Calu3 (cell line): ENCODE measurements at regions of chr7 and their contacts with region 1.

Region 1: GRCh38 chr7:20598459-20599309 is 16.8 kb upstream of the ABCB5 start:
- DNase-seq: peak; percentile 35
- H3K4me3 Mint-ChIP-seq: no peak overlapping the region
- H3K27ac Mint-ChIP-seq: peak overlapping the region; percentile 55
- H3K4me1 Mint-ChIP-seq: peaks cover 17% of the 10 kb centered on the region
- H3K27me3 Mint-ChIP-seq: no peaks in the 10 kb centered on the region
- CTCF ChIP-seq: peak; percentile 72

Region 2: DNA sequence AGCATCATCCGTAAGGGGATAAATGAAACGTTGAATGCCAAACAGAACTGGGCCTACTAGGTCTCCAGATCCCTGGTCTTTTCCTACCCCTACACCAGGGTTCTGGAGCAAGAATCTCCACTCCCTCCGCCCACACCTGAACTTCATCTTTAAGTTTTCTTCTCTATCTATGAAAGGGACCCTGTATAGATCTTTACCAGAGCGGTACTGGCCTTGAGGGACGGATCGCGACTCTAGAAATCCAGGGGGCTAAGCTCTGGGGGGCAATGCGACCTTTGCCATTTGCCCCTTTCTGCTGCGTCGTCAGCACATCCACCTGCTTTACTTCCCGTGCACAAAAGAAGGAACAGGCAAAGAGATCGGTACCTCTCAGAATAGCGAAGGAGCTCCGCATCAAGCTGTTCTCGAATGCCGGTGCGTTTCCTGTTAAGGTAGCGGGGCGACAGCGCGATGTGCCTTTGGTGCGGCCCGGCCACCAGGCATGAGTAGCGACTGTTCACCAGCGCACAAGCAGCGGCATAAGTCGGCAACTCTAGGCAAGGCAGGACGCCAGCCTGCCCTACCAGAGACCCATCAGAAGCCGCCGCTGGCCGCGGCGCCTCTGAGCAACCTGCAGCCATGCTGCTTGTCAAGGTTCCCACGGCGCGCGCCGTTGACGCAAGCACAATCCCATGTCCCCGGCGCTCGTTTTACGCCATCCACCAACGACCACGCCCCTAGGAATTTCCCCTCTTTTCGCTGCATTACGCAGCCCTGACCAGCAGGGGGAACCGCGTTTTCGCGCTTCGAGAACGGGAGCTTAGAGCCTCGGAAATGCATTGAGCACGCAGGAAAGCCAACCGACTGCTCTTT is 890.1 kb before region 1 on chr7 and contains the start of gene POLR1F:
- CTCF ChIA-PET with region 1: interaction called, 122 read pairs
- intact Hi-C with region 1: loop called (anchors 1 kb)
- DNase-seq: peak; percentile 99
- H3K4me3 Mint-ChIP-seq: peak within 1 kb of the TSS; percentile 99
- H3K27ac Mint-ChIP-seq: peak within 1 kb of the TSS; percentile 92
- H3K4me1 Mint-ChIP-seq: peaks cover 52% of the 10 kb centered on the region
- H3K27me3 Mint-ChIP-seq: no peaks in the 10 kb centered on the region
- CTCF ChIP-seq: peak; percentile 96
- total RNA-seq, gene POLR1F: 37.7 and 43.1 TPM in 2 replicates

Region 3: GRCh38 chr7:19747740-19748339 is 850.8 kb before region 1 on chr7:
- CTCF ChIA-PET with region 1: interaction called, 53 read pairs
- intact Hi-C with region 1: loop called (anchors 1 kb)
- DNase-seq: peak; percentile 39
- H3K4me3 Mint-ChIP-seq: no peak overlapping the region
- H3K27ac Mint-ChIP-seq: no peak overlapping the region
- H3K4me1 Mint-ChIP-seq: peaks cover 26% of the 10 kb centered on the region
- H3K27me3 Mint-ChIP-seq: no peaks in the 10 kb centered on the region
- CTCF ChIP-seq: peak; percentile 86

Region 4: GRCh38 chr7:20158684-20159083 is 440.0 kb before region 1 on chr7:
- CTCF ChIA-PET with region 1: interaction called, 3 read pairs
- intact Hi-C with region 1: loop called (anchors 1 kb)
- DNase-seq: peak; percentile 20
- H3K4me3 Mint-ChIP-seq: no peak overlapping the region
- H3K27ac Mint-ChIP-seq: peak overlapping the region; percentile 48
- H3K4me1 Mint-ChIP-seq: peaks cover 24% of the 10 kb centered on the region
- H3K27me3 Mint-ChIP-seq: no peaks in the 10 kb centered on the region
- CTCF ChIP-seq: no peak

Region 5: DNA sequence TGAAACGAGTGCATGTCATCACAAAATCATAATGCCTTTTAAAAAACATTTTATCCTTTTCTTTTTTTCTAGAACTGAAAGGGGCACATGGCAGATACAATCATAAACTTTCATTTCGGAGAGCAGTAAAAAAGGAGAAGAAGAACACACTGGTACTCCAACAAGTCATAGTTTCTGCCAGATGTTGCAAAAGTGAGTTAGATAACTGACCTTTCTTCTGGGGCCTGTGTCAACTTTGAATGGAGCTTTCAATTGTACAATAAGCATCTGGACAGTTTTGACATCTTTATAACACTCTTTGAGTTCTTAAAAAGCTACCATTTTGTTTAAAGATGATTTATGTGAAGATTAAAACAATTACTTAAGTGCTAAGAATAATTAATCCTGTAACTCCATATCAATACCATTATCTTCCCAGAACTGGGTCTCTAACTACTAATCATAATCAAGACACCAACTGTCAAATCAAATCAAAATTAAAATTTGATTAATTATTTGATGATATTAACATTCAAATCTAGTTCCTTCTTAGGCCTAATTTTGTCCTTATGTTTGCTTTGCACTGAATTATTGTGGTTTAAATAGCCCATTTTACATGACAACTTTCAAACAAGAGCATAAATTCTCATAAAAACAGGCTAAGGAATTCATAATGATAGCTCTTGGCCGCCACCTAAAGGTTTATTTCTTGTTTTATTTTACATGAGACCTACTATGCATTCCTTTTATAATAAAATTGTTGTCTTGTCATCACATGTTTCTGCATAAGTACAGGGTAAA is 287.5 kb before region 1 on chr7:
- CTCF ChIA-PET with region 1: interaction called, 9 read pairs
- intact Hi-C with region 1: loop called (anchors 5 kb)
- DNase-seq: peak; percentile 50
- H3K4me3 Mint-ChIP-seq: no peak overlapping the region
- H3K27ac Mint-ChIP-seq: peak overlapping the region; percentile 30
- H3K4me1 Mint-ChIP-seq: peaks cover 42% of the 10 kb centered on the region
- H3K27me3 Mint-ChIP-seq: no peaks in the 10 kb centered on the region
- CTCF ChIP-seq: peak; percentile 71

Region 6: GRCh38 chr7:20393021-20393610 is 205.6 kb before region 1 on chr7:
- CTCF ChIA-PET with region 1: interaction called, 14 read pairs
- intact Hi-C with region 1: no loop called
- DNase-seq: peak; percentile 39
- H3K4me3 Mint-ChIP-seq: peak overlapping the region; percentile 23
- H3K27ac Mint-ChIP-seq: peak overlapping the region; percentile 38
- H3K4me1 Mint-ChIP-seq: peaks cover 42% of the 10 kb centered on the region
- H3K27me3 Mint-ChIP-seq: no peaks in the 10 kb centered on the region
- CTCF ChIP-seq: no peak

Region 7: GRCh38 chr7:20539201-20539600 is 59.5 kb before region 1 on chr7:
- CTCF ChIA-PET with region 1: interaction called, 11 read pairs
- intact Hi-C with region 1: no loop called
- DNase-seq: no peak
- H3K4me3 Mint-ChIP-seq: no peak overlapping the region
- H3K27ac Mint-ChIP-seq: no peak overlapping the region
- H3K4me1 Mint-ChIP-seq: no peaks in the 10 kb centered on the region
- H3K27me3 Mint-ChIP-seq: no peaks in the 10 kb centered on the region
- CTCF ChIP-seq: no peak

Region 8: GRCh38 chr7:20560325-20561180 is 38.1 kb before region 1 on chr7:
- CTCF ChIA-PET with region 1: no interaction called
- intact Hi-C with region 1: no loop called
- DNase-seq: no peak
- H3K4me3 Mint-ChIP-seq: no peak overlapping the region
- H3K27ac Mint-ChIP-seq: peak overlapping the region; percentile 97
- H3K4me1 Mint-ChIP-seq: peaks cover 42% of the 10 kb centered on the region
- H3K27me3 Mint-ChIP-seq: no peaks in the 10 kb centered on the region
- CTCF ChIP-seq: no peak

Region 9: DNA sequence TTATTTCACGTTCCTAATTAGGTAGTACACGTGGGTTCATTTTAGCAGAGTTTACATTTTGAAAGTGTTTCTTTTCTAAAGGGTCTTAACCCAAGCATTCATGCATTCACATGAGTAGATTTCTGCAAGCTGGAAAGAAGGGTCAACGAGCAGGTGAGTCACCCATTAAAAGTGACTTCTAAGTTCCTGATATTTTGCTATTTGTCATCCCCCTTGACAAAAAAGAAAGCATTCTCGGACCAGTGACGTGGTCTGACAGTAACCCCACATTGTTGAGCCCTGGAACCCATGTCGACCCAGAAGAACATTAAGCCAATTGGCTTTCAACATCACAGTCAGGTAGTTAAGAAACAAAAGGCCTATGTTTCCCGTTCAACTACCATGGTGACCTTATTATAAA is 66.4 kb after region 1 on chr7:
- CTCF ChIA-PET with region 1: no interaction called
- intact Hi-C with region 1: no loop called
- DNase-seq: no peak
- H3K4me3 Mint-ChIP-seq: no peak overlapping the region
- H3K27ac Mint-ChIP-seq: no peak overlapping the region
- H3K4me1 Mint-ChIP-seq: no peaks in the 10 kb centered on the region
- H3K27me3 Mint-ChIP-seq: peaks cover 13% of the 10 kb centered on the region
- CTCF ChIP-seq: no peak

Region 10: GRCh38 chr7:21580073-21580521 is 981.4 kb after region 1 on chr7:
- CTCF ChIA-PET with region 1: no interaction called
- intact Hi-C with region 1: no loop called
- DNase-seq: no peak
- H3K4me3 Mint-ChIP-seq: no peak overlapping the region
- H3K27ac Mint-ChIP-seq: peak overlapping the region; percentile 3
- H3K4me1 Mint-ChIP-seq: peaks cover 15% of the 10 kb centered on the region
- H3K27me3 Mint-ChIP-seq: no peaks in the 10 kb centered on the region
- CTCF ChIP-seq: no peak